Caco-2 (cell line): ENCODE measurements at regions of chr5 and their contacts with region 1.

Region 1: GRCh38 chr5:79020861-79021561 is 35.9 kb upstream of the ARSB start:
- DNase-seq: peak; percentile 50 to 60
- H3K4me3 ChIP-seq: no peak overlapping the region
- H3K4me3 Mint-ChIP-seq: no peak overlapping the region
- H3K27ac Mint-ChIP-seq: no peak overlapping the region
- H3K4me1 ChIP-seq: no peaks in the 10 kb centered on the region
- H3K4me1 Mint-ChIP-seq: peaks cover 10% of the 10 kb centered on the region
- H3K27me3 ChIP-seq: no peaks in the 10 kb centered on the region
- H3K27me3 Mint-ChIP-seq: peaks cover 3% of the 10 kb centered on the region
- CTCF ChIP-seq: peak; percentile 88 to 92

Region 2: DNA sequence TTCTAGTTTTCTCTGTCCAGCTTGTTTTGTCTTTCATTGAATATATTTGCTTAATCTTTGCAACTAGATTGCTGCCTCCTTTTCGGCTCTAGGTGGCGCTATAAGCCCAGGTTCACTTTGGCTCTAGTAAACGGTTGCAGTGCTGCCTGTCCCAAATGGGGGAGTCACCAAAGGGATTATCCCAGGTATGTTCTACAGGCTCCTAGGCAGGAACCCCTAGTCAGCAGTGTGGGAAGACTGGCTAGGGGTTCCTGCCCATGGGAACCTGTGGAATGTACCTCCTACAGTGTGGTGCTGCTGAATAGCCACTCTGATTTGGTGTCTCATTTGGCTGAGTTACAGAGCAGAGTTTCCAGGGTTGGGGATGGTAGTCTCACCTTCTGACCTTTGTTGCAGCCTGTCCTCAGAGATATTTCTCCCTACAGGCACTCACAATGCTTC is 121.1 kb before region 1 on chr5:
- CTCF ChIA-PET with region 1: interaction called, 3 read pairs
- POLR2A ChIA-PET with region 1: no interaction called
- intact Hi-C with region 1: loop called (anchors 1 kb)
- DNase-seq: peak; percentile 71
- H3K4me3 ChIP-seq: no peak overlapping the region
- H3K4me3 Mint-ChIP-seq: no peak overlapping the region
- H3K27ac Mint-ChIP-seq: no peak overlapping the region
- H3K4me1 ChIP-seq: 0 out of 2 replicates have a peak, but pooled peaks cover 4% of the 10 kb centered on the region
- H3K4me1 Mint-ChIP-seq: no peaks in the 10 kb centered on the region
- H3K27me3 ChIP-seq: no peaks in the 10 kb centered on the region
- H3K27me3 Mint-ChIP-seq: no peaks in the 10 kb centered on the region
- CTCF ChIP-seq: peak; percentile 69 to 86

Region 3: GRCh38 chr5:78984439-78985115 is 36.4 kb before region 1 on chr5:
- CTCF ChIA-PET with region 1: interaction called, 7 read pairs
- POLR2A ChIA-PET with region 1: no interaction called
- intact Hi-C with region 1: loop called (anchors 5 kb)
- DNase-seq: peak; percentile 89 to 94
- H3K4me3 ChIP-seq: peak overlapping the region; percentile 86
- H3K4me3 Mint-ChIP-seq: peak overlapping the region; percentile 83
- H3K27ac Mint-ChIP-seq: peak overlapping the region; percentile 84
- H3K4me1 ChIP-seq: peaks cover 21% of the 10 kb centered on the region
- H3K4me1 Mint-ChIP-seq: peaks cover 13% of the 10 kb centered on the region
- H3K27me3 ChIP-seq: no peaks in the 10 kb centered on the region
- H3K27me3 Mint-ChIP-seq: no peaks in the 10 kb centered on the region
- CTCF ChIP-seq: peak; percentile 17 to 59

Region 4: GRCh38 chr5:79200573-79201183 is 179.7 kb after region 1 on chr5:
- CTCF ChIA-PET with region 1: interaction called, 5 read pairs
- POLR2A ChIA-PET with region 1: no interaction called
- intact Hi-C with region 1: loop called (anchors 2 kb)
- DNase-seq: peak in 1 of 2 experiments; percentile 43
- H3K4me3 ChIP-seq: no peak overlapping the region
- H3K4me3 Mint-ChIP-seq: no peak overlapping the region
- H3K27ac Mint-ChIP-seq: no peak overlapping the region
- H3K4me1 ChIP-seq: no peaks in the 10 kb centered on the region
- H3K4me1 Mint-ChIP-seq: no peaks in the 10 kb centered on the region
- H3K27me3 ChIP-seq: no peaks in the 10 kb centered on the region
- H3K27me3 Mint-ChIP-seq: no peaks in the 10 kb centered on the region
- CTCF ChIP-seq: peak; percentile 52 to 81

Region 5: GRCh38 chr5:79333852-79334557 is 313.0 kb after region 1 on chr5:
- CTCF ChIA-PET with region 1: no interaction called
- POLR2A ChIA-PET with region 1: no interaction called
- intact Hi-C with region 1: loop called (anchors 10 kb)
- DNase-seq: no peak
- H3K4me3 ChIP-seq: no peak overlapping the region
- H3K4me3 Mint-ChIP-seq: no peak overlapping the region
- H3K27ac Mint-ChIP-seq: no peak overlapping the region
- H3K4me1 ChIP-seq: no peaks in the 10 kb centered on the region
- H3K4me1 Mint-ChIP-seq: no peaks in the 10 kb centered on the region
- H3K27me3 ChIP-seq: no peaks in the 10 kb centered on the region; the same call in 1 of the 2 replicates
- H3K27me3 Mint-ChIP-seq: no peaks in the 10 kb centered on the region
- CTCF ChIP-seq: peak; percentile 13 to 21

Region 6: DNA sequence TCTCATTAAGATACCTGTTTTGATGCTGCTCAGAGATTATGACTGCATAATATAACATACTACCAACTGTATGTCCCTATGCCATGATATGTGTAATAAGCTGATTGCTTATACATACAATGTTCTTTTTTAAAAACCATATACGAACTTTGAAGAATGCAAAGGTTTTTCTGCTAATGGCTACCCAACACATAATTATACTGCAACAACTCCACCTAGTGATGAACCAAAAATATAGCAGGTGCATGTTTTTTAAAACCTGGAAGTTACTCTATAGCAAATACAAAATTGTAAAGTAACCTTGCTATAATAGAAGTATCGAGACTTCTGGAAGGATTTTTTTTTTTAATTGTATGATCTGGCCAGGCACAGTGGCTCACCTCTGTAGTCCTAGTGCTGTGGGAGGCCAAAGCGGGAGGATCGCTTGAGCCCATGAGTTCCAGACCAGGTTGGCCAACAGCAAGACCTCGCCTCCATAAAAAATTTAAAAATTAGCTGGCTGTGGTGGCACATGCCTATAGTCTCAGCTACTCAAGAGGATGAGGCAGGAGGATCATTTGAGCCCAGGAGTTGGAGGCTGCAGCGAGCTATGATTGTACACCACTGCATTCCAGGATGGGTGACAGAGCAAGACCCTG is 443.8 kb after region 1 on chr5:
- CTCF ChIA-PET with region 1: no interaction called
- POLR2A ChIA-PET with region 1: no interaction called
- intact Hi-C with region 1: loop called (anchors 2 kb)
- DNase-seq: peak in 1 of 2 experiments; percentile 11
- H3K4me3 ChIP-seq: no peak overlapping the region
- H3K4me3 Mint-ChIP-seq: no peak overlapping the region
- H3K27ac Mint-ChIP-seq: no peak overlapping the region
- H3K4me1 ChIP-seq: peaks cover 7% of the 10 kb centered on the region; the same call in 1 of the 2 replicates
- H3K4me1 Mint-ChIP-seq: peaks cover 9% of the 10 kb centered on the region
- H3K27me3 ChIP-seq: no peaks in the 10 kb centered on the region
- H3K27me3 Mint-ChIP-seq: no peaks in the 10 kb centered on the region
- CTCF ChIP-seq: peak; percentile 60 to 66

Region 7: GRCh38 chr5:79857714-79858409 is 836.9 kb after region 1 on chr5:
- CTCF ChIA-PET with region 1: no interaction called
- POLR2A ChIA-PET with region 1: no interaction called
- intact Hi-C with region 1: loop called (anchors 2 kb)
- DNase-seq: peak; percentile 60 to 81
- H3K4me3 ChIP-seq: no peak overlapping the region
- H3K4me3 Mint-ChIP-seq: no peak overlapping the region
- H3K27ac Mint-ChIP-seq: no peak overlapping the region
- H3K4me1 ChIP-seq: no peaks in the 10 kb centered on the region
- H3K4me1 Mint-ChIP-seq: no peaks in the 10 kb centered on the region
- H3K27me3 ChIP-seq: no peaks in the 10 kb centered on the region; the same call in 1 of the 2 replicates
- H3K27me3 Mint-ChIP-seq: no peaks in the 10 kb centered on the region
- CTCF ChIP-seq: peak; percentile 94 to 95